Ascending aorta (tissue), 2 donors: ENCODE measurements at regions of chr16 and their contacts with region 1.

Region 1: GRCh38 chr16:30395155-30395991 is at the start of gene ZNF48:
- DNase-seq: peak in 1 of 2 donors; percentile 89
- H3K4me3 ChIP-seq: peak within 1 kb of the TSS; percentile 92 to 98
- H3K27ac ChIP-seq: peak within 1 kb of the TSS; percentile 81 to 85
- H3K4me1 ChIP-seq: peaks cover 11 to 15% of the 10 kb centered on the region in 2 donors
- H3K27me3 ChIP-seq: no peaks in the 10 kb centered on the region
- CTCF ChIP-seq: peak in 1 of 3 experiments; percentile 68
- total RNA-seq, gene ZNF48: 25.1 TPM

Region 2: DNA sequence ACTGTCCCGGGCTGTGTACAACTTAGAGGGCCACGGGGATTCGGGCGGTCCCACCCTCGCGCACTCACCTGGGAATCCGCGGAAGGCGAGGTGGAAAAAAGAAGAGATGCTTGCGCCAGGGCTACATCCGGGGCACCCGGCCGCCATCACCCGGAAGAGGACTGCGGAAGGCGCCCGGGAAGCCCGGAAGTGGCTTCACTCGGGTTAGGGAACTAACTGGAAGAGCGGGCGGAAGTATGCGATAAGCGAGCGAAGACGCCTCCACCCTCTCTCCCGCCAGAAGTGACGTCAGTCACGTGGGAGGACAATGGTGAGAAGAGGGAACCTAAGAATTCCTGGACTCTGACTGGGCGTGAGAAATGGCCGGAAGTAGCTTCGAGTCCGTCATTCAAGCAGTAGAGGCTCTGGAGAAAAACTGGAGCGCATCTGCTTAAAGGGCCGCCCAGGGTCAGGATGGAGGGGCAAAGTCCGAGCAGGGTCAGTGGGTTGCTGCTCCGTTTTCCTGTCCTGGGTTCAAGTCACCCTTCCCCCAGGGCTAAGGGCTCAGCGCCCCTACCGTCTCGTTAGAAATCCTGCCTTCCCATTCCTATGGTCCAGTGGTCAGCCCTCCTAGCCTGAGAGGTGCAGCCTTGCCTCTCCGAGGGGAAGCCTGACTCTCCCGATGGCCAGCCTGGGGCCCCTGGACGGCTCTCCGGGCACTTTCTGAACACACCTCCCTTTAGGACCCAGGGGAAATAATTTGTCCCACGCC is 40.1 kb before region 1 on chr16 and contains the start of gene CD2BP2:
- intact Hi-C with region 1: loop called (anchors 1 kb)
- DNase-seq: peak; percentile 84 to 99
- H3K4me3 ChIP-seq: peak within 1 kb of the TSS; percentile 72 to 87
- H3K27ac ChIP-seq: peak within 1 kb of the TSS; percentile 95 to 98
- H3K4me1 ChIP-seq: peaks cover 10 to 42% of the 10 kb centered on the region in 2 donors
- H3K27me3 ChIP-seq: no peaks in the 10 kb centered on the region
- CTCF ChIP-seq: peak in 1 of 3 experiments; percentile 5
- total RNA-seq, gene CD2BP2: 15.1 TPM

Region 3: DNA sequence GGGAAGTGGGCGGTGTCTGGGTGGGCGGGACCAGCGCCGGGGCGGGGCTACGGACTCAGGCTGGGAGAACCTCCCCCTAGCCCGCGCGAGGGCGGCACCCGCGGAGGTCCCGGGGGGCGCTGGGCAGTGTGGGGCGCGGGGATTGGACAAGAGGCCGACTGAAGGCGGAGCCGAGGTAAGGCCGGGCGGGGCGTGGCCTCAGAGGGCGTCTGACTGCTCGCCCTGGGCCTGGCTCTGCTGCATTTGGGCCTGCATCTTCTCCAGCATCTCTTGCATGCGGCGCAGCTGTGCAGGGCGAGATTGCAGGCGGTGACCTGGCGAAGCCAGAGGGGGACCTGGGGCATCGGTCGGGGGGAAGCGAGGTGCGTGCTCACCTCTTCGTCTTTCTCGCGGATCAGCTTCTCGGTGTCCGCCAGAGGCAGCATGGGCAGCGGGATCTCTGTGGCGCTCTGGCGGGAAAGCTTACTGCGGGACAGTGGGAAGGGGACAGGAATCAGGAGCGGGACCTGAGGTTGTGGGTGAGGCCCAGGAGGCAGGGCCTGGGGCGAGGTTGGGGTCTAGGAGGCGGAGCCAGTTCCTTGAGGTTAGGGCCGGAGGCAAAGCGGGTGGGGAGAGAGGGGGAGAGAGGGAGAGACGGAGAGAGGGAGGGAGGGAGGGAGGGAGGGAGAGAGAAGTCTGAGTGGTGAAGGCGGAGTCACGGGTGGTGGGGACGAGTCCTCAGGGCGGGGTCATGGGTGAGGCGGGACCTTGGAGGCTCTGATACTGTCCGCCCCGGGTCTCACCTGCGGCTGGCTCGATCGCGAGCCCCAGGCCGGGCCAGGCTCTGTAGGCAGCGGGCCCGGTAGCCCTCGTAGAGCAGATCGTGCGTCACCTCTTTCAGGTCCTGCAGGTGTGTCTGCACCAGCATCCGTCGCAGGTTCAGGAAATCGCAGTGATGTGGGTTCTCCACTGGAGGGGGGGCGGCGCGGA is 16.9 kb before region 1 on chr16:
- intact Hi-C with region 1: loop called (anchors 1 kb)
- DNase-seq: peak; percentile 96 to 100
- H3K4me3 ChIP-seq: peak overlapping the region; percentile 67 to 88
- H3K27ac ChIP-seq: peak overlapping the region; percentile 99 to 100
- H3K4me1 ChIP-seq: peaks cover 8 to 9% of the 10 kb centered on the region in 2 donors
- H3K27me3 ChIP-seq: no peaks in the 10 kb centered on the region
- CTCF ChIP-seq: peak in 2 of 3 experiments; percentile 6 to 28

Region 4: GRCh38 chr16:30407102-30407803 is 11.9 kb after region 1 on chr16 and contains the start of gene ZNF771:
- intact Hi-C with region 1: loop called (anchors 1 kb)
- DNase-seq: peak; percentile 70 to 95
- H3K4me3 ChIP-seq: peak within 1 kb of the TSS; percentile 67 to 82
- H3K27ac ChIP-seq: peak within 1 kb of the TSS; percentile 79 to 94
- H3K4me1 ChIP-seq: peaks cover 8 to 16% of the 10 kb centered on the region in 2 donors
- H3K27me3 ChIP-seq: no peaks in the 10 kb centered on the region
- CTCF ChIP-seq: peak in 1 of 3 experiments; percentile 4
- total RNA-seq, gene ZNF771: 49.6 TPM

Region 5: GRCh38 chr16:30445408-30446202 is 50.2 kb after region 1 on chr16 and contains the start of gene SEPHS2:
- intact Hi-C with region 1: loop called (anchors 2 kb)
- DNase-seq: peak; percentile 99 to 100
- H3K4me3 ChIP-seq: peak within 1 kb of the TSS; percentile 79 to 97
- H3K27ac ChIP-seq: peak within 1 kb of the TSS; percentile 92 to 97
- H3K4me1 ChIP-seq: peaks cover 5 to 16% of the 10 kb centered on the region in 2 donors
- H3K27me3 ChIP-seq: no peaks in the 10 kb centered on the region
- CTCF ChIP-seq: peak; percentile 41 to 59 (median 42)
- total RNA-seq, gene SEPHS2: 22.8 TPM